ENCODE measurements at regions of chr19 and their contacts with region 1.

Region 1: DNA sequence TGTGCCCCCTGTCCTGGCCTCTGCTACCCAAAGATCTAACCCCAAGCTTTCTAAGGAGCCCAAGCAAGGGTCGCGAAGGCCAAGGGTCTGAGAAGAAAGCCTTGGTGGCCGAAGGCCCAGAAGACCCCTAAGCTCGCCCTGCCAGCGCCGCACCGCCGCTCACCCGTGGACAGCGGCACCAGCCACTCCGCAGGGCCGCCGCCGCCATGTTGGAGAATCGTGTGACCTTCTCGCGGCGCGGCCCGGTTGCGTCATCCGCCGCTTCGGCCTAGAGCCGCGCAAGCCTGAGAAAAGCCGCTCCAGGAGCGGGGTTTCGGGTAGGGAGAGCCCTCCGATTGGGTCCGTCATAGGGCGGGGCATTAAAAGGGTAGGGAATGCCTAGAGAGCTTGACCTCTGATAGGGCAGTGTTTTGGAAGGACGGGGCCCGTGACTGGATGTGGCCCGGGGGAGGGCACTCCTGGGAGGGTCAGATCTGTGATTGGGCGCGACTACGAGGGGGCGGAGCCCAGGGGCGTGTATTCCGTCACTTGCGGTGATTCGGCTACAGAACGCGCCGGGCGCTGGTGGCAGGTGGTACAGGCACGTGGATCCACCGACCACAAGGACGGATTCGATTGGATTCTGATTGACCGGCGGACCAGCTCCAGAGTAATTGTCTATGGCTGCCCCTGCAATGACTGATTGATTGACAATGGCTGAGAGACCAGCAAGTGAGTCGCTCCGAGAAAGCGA is at the start of gene TIMM44:
- DNase-seq: peak; percentile 99
- H3K4me3 Mint-ChIP-seq: peak within 1 kb of the TSS; percentile 82
- H3K27ac Mint-ChIP-seq: peak within 1 kb of the TSS; percentile 94
- H3K4me1 Mint-ChIP-seq: peaks cover 37% of the 10 kb centered on the region
- H3K27me3 Mint-ChIP-seq: no peaks in the 10 kb centered on the region

Region 2: GRCh38 chr19:7868676-7869452 is 74.7 kb before region 1 on chr19:
- CTCF ChIA-PET with region 1: no interaction called
- DNase-seq: peak; percentile 86
- H3K4me3 Mint-ChIP-seq: peak overlapping the region; percentile 71
- H3K27ac Mint-ChIP-seq: peak overlapping the region; percentile 81
- H3K4me1 Mint-ChIP-seq: peaks cover 53% of the 10 kb centered on the region
- H3K27me3 Mint-ChIP-seq: peaks cover 85% of the 10 kb centered on the region

Region 3: GRCh38 chr19:7919610-7920518 is 23.7 kb before region 1 on chr19 and contains the start of gene SNAPC2:
- CTCF ChIA-PET with region 1: interaction called, 11 read pairs
- DNase-seq: peak; percentile 97
- H3K4me3 Mint-ChIP-seq: peak within 1 kb of the TSS; percentile 83
- H3K27ac Mint-ChIP-seq: peak within 1 kb of the TSS; percentile 89
- H3K4me1 Mint-ChIP-seq: peaks cover 44% of the 10 kb centered on the region
- H3K27me3 Mint-ChIP-seq: peaks cover 58% of the 10 kb centered on the region

Region 4: DNA sequence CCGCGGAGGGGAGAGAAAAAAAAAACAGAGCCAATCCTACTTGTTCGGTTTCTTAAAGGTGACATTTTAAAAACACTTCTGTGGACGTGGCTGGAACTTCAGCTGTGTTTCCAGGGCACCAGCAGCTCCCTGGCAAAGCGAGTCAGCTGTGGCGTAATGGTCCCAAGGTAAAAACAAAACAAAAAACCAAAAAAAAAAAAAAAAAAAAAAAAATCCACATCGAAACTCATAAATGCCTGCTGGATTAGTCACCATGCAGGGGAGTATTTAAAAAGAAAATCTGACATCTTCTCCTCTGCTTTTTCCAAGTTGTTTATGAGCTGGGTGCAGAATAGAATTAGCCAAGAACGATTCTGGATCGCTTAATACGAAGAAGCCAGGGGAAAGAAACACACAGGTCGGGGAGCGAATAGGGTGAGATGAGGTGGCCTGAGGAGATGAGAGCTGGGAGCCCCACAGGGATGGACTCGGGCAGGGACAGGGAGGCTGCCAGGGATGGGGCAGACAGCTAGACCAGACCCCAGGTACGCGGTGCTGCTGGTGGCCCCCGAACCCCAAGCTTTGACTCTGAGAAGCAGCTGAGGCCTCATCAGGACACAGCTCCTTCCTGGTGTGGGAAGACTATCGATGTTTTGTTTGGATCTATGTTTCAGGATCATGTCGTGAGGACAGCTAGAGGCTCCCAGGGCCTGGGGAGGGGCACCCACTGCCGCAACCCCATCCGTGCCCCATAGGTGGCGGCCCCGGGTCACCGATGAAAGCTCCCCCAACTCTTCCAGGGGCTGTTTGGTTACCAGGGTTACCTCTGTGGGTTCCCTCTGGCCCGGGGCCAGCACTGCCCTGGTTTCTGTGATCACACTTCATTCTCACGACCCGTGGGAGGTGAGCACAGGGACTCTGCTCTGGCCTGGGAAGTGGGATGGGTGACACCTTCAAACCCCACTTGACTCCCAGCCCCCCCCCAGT is 14.6 kb before region 1 on chr19:
- CTCF ChIA-PET with region 1: interaction called, 14 read pairs
- DNase-seq: peak; percentile 69
- H3K4me3 Mint-ChIP-seq: no peak overlapping the region
- H3K27ac Mint-ChIP-seq: peak overlapping the region; percentile 12
- H3K4me1 Mint-ChIP-seq: peaks cover 10% of the 10 kb centered on the region
- H3K27me3 Mint-ChIP-seq: no peaks in the 10 kb centered on the region

Region 5: DNA sequence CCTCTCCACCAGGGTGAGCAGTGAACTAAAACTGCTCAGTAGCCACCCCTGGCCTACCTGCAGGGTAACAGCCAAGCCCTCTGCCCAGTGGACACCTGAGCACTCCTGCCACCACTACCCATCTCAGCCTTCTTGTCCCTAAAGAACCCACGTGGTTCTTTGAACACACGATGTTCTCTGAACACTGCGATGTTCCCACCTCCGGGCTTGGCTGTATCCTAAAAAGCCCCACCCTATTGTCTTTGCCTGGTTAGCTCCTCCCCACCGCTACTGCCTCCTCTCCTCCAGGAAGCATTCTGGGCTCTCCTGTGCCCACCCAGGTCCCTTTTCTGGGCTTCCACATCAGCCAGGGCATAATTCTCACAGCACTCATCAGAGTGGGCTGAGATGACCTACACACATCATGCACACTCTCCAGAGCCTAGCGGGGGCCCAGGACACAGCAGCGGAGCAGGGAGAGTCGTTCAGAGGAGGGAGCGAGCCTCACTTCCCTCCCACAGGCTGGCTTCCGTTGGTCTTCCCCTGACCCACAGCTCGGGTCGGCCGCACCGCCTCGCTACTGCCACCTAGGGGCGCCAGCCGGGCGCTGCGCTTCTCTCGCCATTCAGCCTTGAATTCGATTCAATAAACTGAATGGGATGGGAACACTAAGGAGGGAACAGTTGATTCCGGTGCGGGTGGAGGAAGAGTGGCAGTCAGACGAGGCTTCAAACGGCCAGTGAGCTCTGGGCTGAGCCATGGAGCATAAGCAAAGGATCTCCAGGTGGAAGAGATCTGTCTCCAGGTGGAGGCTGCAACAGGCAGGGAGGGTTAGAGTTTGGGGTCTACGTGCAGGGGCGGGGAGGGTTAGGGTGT is 58.6 kb after region 1 on chr19:
- CTCF ChIA-PET with region 1: interaction called, 14 read pairs
- DNase-seq: peak; percentile 80
- H3K4me3 Mint-ChIP-seq: peak overlapping the region; percentile 63
- H3K27ac Mint-ChIP-seq: peak overlapping the region; percentile 71
- H3K4me1 Mint-ChIP-seq: peaks cover 36% of the 10 kb centered on the region
- H3K27me3 Mint-ChIP-seq: no peaks in the 10 kb centered on the region

Region 6: GRCh38 chr19:8252922-8253589 is 309.4 kb after region 1 on chr19:
- CTCF ChIA-PET with region 1: interaction called, 12 read pairs
- DNase-seq: peak; percentile 90
- H3K4me3 Mint-ChIP-seq: no peak overlapping the region
- H3K27ac Mint-ChIP-seq: no peak overlapping the region
- H3K4me1 Mint-ChIP-seq: peaks cover 18% of the 10 kb centered on the region
- H3K27me3 Mint-ChIP-seq: no peaks in the 10 kb centered on the region

Measured in activated naive CD4-positive, alpha-beta T cell treated with anti-CD3 and anti-CD28 coated beads, Interleukin-2, amount 10 ng/mL, durations not matched to agents 7 days and 5 days (primary cell).